ENCODE measurements at regions of chr6 and their contacts with region 1.

Region 1: DNA sequence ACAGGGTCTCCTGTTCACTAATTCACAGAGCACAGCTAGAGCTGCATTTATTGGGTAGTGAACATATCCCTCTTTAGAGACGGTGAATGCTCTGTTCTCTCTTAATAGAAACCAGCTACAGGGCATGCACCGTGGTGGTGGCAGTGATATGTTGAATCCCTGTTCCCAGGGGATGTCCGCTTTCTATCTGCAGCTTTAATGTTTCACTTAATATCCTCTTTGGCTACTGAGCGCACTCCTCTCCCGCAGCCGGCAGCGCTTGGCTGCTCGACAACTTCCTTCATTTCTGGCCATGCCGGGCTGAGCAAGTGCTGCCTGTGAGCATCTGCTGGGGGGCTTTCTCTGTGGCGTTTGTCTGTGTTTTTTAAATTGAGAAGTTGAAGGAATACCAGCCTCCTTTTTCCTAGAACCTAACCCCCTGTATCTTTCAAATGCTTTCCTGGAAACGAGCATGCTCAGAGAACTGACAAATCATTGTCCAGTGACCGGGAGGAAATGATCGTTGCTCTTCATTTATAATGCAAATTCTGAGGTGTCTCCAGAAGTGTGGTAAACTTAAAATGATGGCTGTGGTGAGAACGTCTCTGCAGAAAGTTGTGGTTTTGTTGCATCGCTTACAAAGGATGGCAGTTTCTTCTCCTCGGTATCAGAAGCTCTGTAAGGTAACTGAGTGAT is 297.9 kb downstream of the UTRN start:
- DNase-seq: peak; percentile 80
- ATAC-seq: peak; percentile 73
- H3K4me3 Mint-ChIP-seq: peak overlapping the region; percentile 76
- H3K27ac Mint-ChIP-seq: peak overlapping the region; percentile 91
- H3K4me1 Mint-ChIP-seq: peaks cover 76% of the 10 kb centered on the region
- H3K27me3 Mint-ChIP-seq: no peaks in the 10 kb centered on the region

Region 2: DNA sequence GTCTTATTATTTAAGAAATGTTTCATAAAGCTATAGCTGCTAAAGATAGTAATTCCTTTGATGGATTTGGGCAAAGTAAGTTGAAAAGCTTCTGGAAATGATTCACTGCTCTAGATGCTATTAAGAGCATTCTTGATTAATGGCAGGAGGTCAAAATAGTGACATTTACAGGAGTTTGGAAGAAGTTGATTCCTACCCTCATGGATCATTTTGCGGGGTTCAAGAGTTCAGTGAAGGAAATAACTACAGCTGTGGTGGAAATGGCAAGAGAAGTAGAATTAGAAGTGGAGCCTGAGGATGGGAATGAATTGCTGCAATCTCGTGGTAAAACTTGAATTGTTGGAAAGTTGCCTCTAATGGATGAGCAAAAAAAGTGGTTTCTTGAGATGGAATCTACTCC is 18.1 kb after region 1 on chr6:
- CTCF ChIA-PET with region 1: interaction called, 15 read pairs
- DNase-seq: no peak
- ATAC-seq: no peak
- H3K4me3 Mint-ChIP-seq: no peak overlapping the region
- H3K27ac Mint-ChIP-seq: no peak overlapping the region
- H3K4me1 Mint-ChIP-seq: peaks cover 38% of the 10 kb centered on the region
- H3K27me3 Mint-ChIP-seq: no peaks in the 10 kb centered on the region

Measured in activated CD8-positive, alpha-beta memory T cell treated with anti-CD3 and anti-CD28 coated beads, Interleukin-2, amount 10 ng/mL, durations not matched to agents 7 days and 5 days (primary cell).